Endothelial cell of umbilical vein (primary cell): ENCODE measurements at regions of chr16 and their contacts with region 1.

Region 1: DNA sequence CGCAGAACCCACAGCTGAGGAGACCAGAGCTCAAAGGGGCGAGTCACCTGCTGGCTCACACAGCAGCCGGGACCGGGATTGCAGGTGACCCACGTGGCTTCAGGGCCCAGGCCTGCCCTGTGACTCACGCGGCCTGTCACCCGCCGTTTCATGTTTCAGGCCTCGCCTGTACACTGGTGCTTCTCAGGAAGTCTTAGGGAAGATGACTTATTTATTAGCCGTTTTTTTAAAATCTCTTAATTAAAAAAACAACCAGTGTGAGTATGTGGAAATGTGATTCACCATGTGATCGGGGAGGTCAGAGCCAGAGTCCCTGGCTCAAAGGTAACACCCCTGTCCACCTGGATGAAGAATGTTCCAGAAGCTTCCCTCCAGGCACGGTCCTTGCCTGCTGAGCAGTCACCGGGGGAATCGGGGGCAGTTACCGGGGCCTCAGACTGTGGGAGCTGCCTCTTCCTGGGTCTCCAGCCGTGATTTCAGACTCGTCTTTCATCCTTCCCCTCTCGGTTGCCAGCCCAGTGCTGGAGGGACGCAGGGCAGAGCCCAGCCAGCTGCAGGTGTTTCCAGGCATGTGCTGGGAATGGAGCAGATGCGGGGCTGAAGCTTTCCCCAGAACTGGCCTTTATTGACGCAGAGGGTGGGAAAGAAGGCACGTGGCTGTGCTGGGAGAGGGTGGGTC is 49.3 kb downstream of the CMIP start:
- DNase-seq: peak; percentile 94
- H3K4me3 ChIP-seq: no peak overlapping the region
- H3K27ac ChIP-seq: peak overlapping the region; percentile 96
- H3K4me1 ChIP-seq: peaks cover 80% of the 10 kb centered on the region
- H3K27me3 ChIP-seq: no peaks in the 10 kb centered on the region
- CTCF ChIP-seq: no peak
- POLR2A ChIP-seq: no peak

Region 2: DNA sequence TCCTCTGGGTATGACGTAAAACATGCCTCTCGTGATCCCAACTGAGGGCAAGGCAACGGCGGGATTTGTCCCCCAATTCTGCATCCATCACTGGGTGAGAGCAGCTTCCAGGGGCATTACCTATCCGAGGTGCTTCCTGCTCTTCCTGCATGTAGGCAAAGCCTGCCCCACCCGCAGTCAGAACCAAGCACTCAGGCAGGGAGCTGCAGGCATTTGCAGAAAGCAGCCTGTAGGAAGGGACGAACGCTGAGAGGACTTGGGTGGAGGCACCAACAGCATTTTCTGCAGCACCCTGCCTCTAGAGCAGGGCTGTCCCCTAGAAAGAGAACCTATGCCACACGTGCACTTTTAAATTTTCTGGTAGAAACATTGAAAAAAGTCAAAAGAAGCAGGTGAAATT is 250.0 kb before region 1 on chr16:
- CTCF ChIA-PET with region 1: no interaction called
- POLR2A ChIA-PET with region 1: no interaction called
- dilution Hi-C with region 1: no loop called
- intact Hi-C with region 1: no loop called
- DNase-seq: no peak
- H3K4me3 ChIP-seq: no peak overlapping the region
- H3K27ac ChIP-seq: no peak overlapping the region
- H3K4me1 ChIP-seq: no peaks in the 10 kb centered on the region
- H3K27me3 ChIP-seq: peaks cover 0 to 5% of the 10 kb centered on the region in 2 experiments
- CTCF ChIP-seq: no peak
- POLR2A ChIP-seq: no peak

Region 3: DNA sequence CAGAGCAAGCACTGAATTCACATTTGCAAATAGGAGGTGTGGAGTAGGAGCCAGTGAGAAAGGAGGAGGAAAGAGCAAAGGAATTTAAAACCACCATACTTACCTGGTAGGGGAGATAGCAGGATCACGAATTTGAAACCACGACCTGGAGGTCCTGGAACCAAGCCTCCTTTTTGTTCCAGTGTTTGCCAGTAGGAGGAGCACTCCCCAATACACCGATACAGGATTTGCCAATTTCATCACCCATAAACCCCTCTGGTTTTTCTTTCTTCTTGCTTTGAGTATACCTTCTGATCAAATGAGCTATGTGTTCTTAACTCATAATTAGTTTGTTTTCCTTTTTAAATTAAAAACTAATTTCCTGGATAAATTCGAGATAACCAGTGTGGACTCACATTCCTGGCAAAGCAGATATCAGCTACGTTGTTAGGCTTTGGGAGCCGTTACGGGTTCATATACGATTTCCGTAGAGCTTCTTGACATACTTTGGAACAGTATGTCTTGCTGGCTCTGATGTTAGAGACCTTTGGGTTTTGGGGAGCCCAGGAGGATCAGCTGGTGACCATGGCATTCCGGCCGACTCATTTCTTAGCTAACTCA is 232.7 kb before region 1 on chr16:
- CTCF ChIA-PET with region 1: no interaction called
- POLR2A ChIA-PET with region 1: no interaction called
- dilution Hi-C with region 1: no loop called
- intact Hi-C with region 1: no loop called
- DNase-seq: peak; percentile 30
- H3K4me3 ChIP-seq: no peak overlapping the region
- H3K27ac ChIP-seq: no peak overlapping the region
- H3K4me1 ChIP-seq: no peaks in the 10 kb centered on the region
- H3K27me3 ChIP-seq: peaks cover 0 to 1% of the 10 kb centered on the region in 2 experiments
- CTCF ChIP-seq: peak; percentile 71 to 72
- POLR2A ChIP-seq: no peak

Region 4: DNA sequence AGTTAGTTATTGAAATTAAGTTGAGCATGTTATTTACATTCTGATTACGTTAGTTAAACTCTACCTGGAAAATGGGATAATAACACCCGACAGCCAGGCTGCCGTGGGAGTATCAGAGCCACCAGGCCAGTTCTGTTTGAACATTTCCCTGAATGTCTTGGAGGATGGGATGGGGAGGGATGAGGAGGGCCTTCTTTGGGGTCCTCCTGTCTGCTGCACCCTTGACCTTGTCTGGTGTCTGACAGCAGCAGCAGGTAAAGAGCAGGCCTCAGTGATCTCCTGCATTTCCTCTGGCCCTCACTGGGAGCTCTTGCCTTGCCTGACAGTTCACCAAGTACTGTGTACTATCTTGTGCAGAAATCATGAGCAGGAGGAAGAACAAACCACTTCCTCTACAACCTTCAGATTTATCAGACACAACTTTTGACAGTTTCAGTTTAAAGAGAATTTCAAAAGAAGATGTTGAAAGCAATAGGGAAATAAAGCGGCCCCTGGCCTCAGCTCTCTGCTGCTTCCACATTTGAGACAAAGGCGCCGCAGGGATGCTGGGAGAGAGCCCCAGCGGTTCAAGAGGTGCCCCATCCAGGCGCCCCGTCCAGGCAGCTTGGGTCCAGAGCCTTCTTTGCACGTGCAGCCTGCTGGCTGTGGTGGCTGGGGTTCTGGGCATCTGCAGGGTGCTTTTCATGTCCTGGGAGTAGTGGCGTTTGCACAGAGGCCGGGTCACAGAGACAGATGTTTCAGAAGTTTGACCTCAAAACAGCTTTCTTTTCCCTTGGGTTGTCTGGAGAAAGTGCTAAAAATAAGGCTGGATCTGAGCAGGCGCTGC is 24.0 kb before region 1 on chr16:
- CTCF ChIA-PET with region 1: interaction called, 3 read pairs
- POLR2A ChIA-PET with region 1: interaction called, 4 read pairs
- dilution Hi-C with region 1: no loop called
- intact Hi-C with region 1: loop called (anchors 1 kb)
- DNase-seq: no peak
- H3K4me3 ChIP-seq: no peak overlapping the region
- H3K27ac ChIP-seq: no peak overlapping the region
- H3K4me1 ChIP-seq: peaks cover 22% of the 10 kb centered on the region
- H3K27me3 ChIP-seq: no peaks in the 10 kb centered on the region
- CTCF ChIP-seq: no peak
- POLR2A ChIP-seq: no peak

Region 5: GRCh38 chr16:81478876-81479511 is 14.9 kb before region 1 on chr16:
- CTCF ChIA-PET with region 1: interaction called, 4 read pairs
- POLR2A ChIA-PET with region 1: interaction called, 4 read pairs
- dilution Hi-C with region 1: no loop called
- intact Hi-C with region 1: loop called (anchors 2 kb)
- DNase-seq: peak; percentile 90
- H3K4me3 ChIP-seq: peak overlapping the region in 1 of 3 experiments; percentile 4
- H3K27ac ChIP-seq: peak overlapping the region; percentile 44
- H3K4me1 ChIP-seq: peaks cover 43% of the 10 kb centered on the region
- H3K27me3 ChIP-seq: no peaks in the 10 kb centered on the region
- CTCF ChIP-seq: no peak
- POLR2A ChIP-seq: no peak

Region 6: GRCh38 chr16:81532491-81533174 is 38.7 kb after region 1 on chr16:
- CTCF ChIA-PET with region 1: no interaction called
- POLR2A ChIA-PET with region 1: no interaction called
- dilution Hi-C with region 1: no loop called
- intact Hi-C with region 1: no loop called
- DNase-seq: no peak
- H3K4me3 ChIP-seq: no peak overlapping the region
- H3K27ac ChIP-seq: no peak overlapping the region
- H3K4me1 ChIP-seq: no peaks in the 10 kb centered on the region
- H3K27me3 ChIP-seq: no peaks in the 10 kb centered on the region
- CTCF ChIP-seq: no peak
- POLR2A ChIP-seq: no peak

Region 7: GRCh38 chr16:81551151-81551808 is 57.4 kb after region 1 on chr16:
- CTCF ChIA-PET with region 1: no interaction called
- POLR2A ChIA-PET with region 1: interaction called, 3 read pairs
- dilution Hi-C with region 1: no loop called
- intact Hi-C with region 1: loop called (anchors 2 kb)
- DNase-seq: peak; percentile 76
- H3K4me3 ChIP-seq: no peak overlapping the region
- H3K27ac ChIP-seq: peak overlapping the region; percentile 87
- H3K4me1 ChIP-seq: peaks cover 46% of the 10 kb centered on the region
- H3K27me3 ChIP-seq: no peaks in the 10 kb centered on the region
- CTCF ChIP-seq: no peak
- POLR2A ChIP-seq: no peak

Region 8: DNA sequence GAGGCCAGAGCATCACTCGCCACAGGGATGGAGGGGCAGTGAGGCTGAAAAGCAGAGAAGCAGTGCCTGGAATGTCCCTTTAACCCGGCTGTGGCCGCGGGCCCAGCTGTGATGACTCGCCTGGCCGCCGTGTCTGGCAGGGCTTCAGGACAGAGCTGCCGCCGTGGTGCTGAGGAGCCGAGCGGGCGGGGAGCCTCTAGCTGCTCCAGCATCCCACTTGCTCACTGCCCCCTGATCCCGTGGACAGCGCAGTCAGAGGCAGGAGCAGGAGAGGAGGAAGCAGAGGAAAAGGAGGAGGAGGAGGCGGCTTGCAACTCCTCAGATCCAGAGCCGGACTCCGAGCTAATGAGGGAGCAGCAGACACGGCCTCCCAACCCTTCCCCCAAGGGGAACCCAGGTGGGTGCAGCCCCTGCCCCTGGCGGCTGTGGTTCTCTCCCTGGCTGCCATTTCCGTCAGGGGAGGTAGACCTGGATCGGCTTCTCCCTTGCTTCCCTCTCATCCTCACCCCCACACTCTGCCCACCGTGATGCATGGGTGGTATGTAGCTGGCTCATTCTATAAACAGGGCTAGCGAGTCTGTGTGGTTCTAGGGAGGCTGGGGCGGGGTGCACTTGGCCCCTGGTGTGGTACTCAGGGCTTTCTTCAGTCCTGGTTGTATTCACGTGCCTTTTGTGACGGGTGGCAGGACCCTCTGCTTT is 116.4 kb after region 1 on chr16:
- CTCF ChIA-PET with region 1: no interaction called
- POLR2A ChIA-PET with region 1: no interaction called
- dilution Hi-C with region 1: no loop called
- intact Hi-C with region 1: loop called (anchors 5 kb)
- DNase-seq: peak; percentile 77
- H3K4me3 ChIP-seq: peak overlapping the region in 1 of 3 experiments; percentile 18
- H3K27ac ChIP-seq: peak overlapping the region; percentile 49
- H3K4me1 ChIP-seq: peaks cover 46% of the 10 kb centered on the region
- H3K27me3 ChIP-seq: no peaks in the 10 kb centered on the region
- CTCF ChIP-seq: no peak
- POLR2A ChIP-seq: no peak

Region 9: GRCh38 chr16:81686391-81687130 is 192.7 kb after region 1 on chr16:
- CTCF ChIA-PET with region 1: no interaction called
- POLR2A ChIA-PET with region 1: no interaction called
- dilution Hi-C with region 1: no loop called
- intact Hi-C with region 1: loop called (anchors 2 kb)
- DNase-seq: peak; percentile 99
- H3K4me3 ChIP-seq: no peak overlapping the region
- H3K27ac ChIP-seq: peak overlapping the region; percentile 95
- H3K4me1 ChIP-seq: peaks cover 29% of the 10 kb centered on the region
- H3K27me3 ChIP-seq: no peaks in the 10 kb centered on the region
- CTCF ChIP-seq: no peak
- POLR2A ChIP-seq: peak; percentile 80